Activated T-helper 1 cell treated with anti-CD3 and anti-CD28 coated beads, Interleukin-12 subunit alpha, Interleukin-12 subunit beta, Interleukin-2, Interleukin-4 antibody, amounts not matched to agents 30 ng/mL and 10 ng/mL and 1 ng/mL, durations not matched to agents 14 hours and 24 hours and 36 hours (primary cell): ENCODE measurements at regions of chr9 and their contacts with region 1.

Region 1: GRCh38 chr9:122264360-122265148 is at the starts of genes MRRF and RBM18:
- DNase-seq: peak; percentile 89
- H3K4me3 Mint-ChIP-seq: peak within 1 kb of the TSS; percentile 97
- H3K27ac Mint-ChIP-seq: peak within 1 kb of the TSS; percentile 100
- H3K4me1 Mint-ChIP-seq: peaks cover 38% of the 10 kb centered on the region
- H3K27me3 Mint-ChIP-seq: no peaks in the 10 kb centered on the region
- total RNA-seq, gene MRRF: 58.8 and 66.0 TPM in 2 replicates
- total RNA-seq, gene RBM18: 29.9 and 31.5 TPM in 2 replicates

Region 2: GRCh38 chr9:120642129-120642770 is 1622.3 kb before region 1 on chr9:
- intact Hi-C with region 1: no loop called
- DNase-seq: no peak
- H3K4me3 Mint-ChIP-seq: no peak overlapping the region
- H3K27ac Mint-ChIP-seq: no peak overlapping the region
- H3K4me1 Mint-ChIP-seq: no peaks in the 10 kb centered on the region
- H3K27me3 Mint-ChIP-seq: no peaks in the 10 kb centered on the region

Region 3: GRCh38 chr9:122125158-122125508 is 139.4 kb before region 1 on chr9:
- intact Hi-C with region 1: loop called (anchors 10 kb)
- DNase-seq: peak; percentile 60
- H3K4me3 Mint-ChIP-seq: no peak overlapping the region
- H3K27ac Mint-ChIP-seq: no peak overlapping the region
- H3K4me1 Mint-ChIP-seq: peaks cover 5% of the 10 kb centered on the region
- H3K27me3 Mint-ChIP-seq: peaks cover 29% of the 10 kb centered on the region

Region 4: DNA sequence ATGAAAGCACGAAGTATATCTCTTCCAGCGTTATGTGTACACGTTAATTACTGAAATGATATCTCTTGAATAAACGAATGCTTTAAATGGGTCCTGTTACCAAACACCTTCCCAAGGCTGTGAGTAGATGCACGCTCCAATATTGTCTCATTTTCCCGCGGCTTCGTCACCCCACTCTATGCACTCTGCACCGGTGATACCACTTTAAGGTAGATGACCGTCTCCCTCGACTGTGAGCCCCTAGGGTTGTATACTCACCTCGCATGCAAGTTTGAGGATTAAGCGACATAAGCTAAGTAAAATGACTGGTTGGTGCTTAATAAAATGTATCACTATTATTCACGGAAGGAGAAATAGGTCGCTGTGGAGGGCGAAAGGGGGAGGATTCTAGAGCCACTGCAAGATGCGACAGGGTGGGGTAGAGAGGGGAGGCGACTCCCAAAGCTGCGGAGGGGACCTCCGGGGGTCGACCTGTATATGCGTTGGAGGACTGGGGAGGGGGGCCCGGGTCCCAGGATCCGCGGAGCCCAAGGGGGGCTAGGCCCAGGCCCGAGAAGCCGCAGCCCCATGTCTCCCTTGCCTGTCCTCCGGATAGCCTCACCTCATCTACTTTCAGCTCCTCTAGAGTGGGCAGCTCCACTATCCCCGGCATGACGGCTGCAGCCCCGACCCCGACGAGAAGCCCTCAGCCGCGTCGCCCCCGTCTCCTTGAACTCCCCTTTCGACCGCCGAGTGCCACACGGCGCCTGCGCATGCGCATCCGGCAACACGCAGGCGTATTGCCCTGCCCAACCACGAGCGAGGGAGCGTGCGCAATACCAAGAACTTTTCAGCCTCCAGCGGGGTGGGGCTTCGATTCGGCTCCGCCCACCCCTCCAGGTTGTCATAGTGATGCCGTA is 105.3 kb before region 1 on chr9 and contains the starts of genes MORN5 and NDUFA8:
- intact Hi-C with region 1: loop called (anchors 1 kb)
- DNase-seq: peak; percentile 95
- H3K4me3 Mint-ChIP-seq: peak within 1 kb of the TSS; percentile 93
- H3K27ac Mint-ChIP-seq: peak within 1 kb of the TSS; percentile 87
- H3K4me1 Mint-ChIP-seq: peaks cover 35% of the 10 kb centered on the region
- H3K27me3 Mint-ChIP-seq: peaks cover 12% of the 10 kb centered on the region
- total RNA-seq, gene MORN5: not detected in 2 replicates
- total RNA-seq, gene NDUFA8: 49.6 and 51.6 TPM in 2 replicates

Region 5: DNA sequence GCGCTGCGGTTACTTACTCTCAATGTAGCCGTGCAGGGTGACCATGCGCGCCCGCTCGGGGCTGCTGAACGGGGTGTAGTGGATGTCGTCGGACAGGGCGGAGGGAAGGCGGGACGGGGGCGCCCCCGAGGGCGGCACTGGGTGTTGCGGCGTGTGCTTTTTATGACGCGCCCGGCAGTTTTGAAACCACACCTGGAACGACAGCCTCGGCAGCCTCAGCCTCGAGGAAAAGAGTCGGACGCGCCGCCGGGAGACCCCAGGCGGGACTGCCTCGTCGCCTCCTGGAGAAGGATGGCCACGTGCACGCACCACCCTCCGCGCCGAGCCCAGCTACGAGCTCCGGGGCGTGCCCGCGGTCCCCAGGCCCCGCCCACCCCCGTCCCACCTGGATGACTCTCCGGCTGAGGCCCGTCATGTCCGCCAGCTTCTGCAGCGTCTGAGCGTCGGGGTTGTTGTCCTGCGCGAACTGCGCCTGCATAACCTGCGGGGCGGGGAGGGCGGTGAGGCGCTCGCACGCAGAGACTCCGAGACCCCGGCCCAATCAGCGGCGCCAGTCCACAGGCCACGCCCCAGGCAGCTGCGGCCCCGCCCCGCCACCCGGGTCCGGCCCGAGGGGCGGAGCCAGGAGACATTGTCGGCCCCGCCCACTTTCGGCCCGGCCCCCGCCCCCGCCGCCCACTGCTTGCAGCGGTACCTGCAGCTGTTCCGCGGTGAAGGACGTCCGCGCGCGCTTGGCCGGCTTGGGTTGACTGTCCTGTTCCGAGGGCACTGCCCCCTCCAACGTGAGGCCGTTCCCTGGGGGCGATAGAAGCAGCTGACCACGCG is 50.8 kb before region 1 on chr9:
- intact Hi-C with region 1: loop called (anchors 1 kb)
- DNase-seq: peak; percentile 59
- H3K4me3 Mint-ChIP-seq: peak overlapping the region; percentile 72
- H3K27ac Mint-ChIP-seq: no peak overlapping the region
- H3K4me1 Mint-ChIP-seq: peaks cover 18% of the 10 kb centered on the region
- H3K27me3 Mint-ChIP-seq: peaks cover 66% of the 10 kb centered on the region

Region 6: DNA sequence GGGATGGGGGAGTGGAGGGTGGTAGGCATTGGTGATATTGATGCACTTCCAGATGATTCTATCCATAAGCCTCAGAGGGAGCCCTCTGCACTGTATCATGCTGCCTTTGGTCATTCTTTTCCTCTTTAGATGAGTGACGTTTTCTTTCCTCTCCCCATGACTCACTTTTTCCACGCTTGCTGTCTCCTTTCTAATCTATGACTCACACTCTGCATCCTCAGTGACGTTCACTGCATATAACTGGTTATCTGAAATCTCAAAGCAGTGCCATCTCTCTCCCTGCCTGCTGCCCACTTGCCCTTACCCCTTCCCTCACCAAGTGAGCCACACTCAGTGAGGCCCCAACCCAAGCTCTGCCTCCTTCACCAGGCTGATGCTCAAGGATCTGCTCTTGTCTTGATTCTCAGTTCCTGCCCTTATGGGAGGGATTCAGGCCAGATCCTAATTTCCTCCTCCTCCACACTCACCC is 137.9 kb after region 1 on chr9:
- intact Hi-C with region 1: loop called (anchors 1 kb)
- DNase-seq: peak; percentile 33
- H3K4me3 Mint-ChIP-seq: peak overlapping the region; percentile 5
- H3K27ac Mint-ChIP-seq: peak overlapping the region; percentile 86
- H3K4me1 Mint-ChIP-seq: peaks cover 25% of the 10 kb centered on the region
- H3K27me3 Mint-ChIP-seq: peaks cover 6% of the 10 kb centered on the region

Region 7: DNA sequence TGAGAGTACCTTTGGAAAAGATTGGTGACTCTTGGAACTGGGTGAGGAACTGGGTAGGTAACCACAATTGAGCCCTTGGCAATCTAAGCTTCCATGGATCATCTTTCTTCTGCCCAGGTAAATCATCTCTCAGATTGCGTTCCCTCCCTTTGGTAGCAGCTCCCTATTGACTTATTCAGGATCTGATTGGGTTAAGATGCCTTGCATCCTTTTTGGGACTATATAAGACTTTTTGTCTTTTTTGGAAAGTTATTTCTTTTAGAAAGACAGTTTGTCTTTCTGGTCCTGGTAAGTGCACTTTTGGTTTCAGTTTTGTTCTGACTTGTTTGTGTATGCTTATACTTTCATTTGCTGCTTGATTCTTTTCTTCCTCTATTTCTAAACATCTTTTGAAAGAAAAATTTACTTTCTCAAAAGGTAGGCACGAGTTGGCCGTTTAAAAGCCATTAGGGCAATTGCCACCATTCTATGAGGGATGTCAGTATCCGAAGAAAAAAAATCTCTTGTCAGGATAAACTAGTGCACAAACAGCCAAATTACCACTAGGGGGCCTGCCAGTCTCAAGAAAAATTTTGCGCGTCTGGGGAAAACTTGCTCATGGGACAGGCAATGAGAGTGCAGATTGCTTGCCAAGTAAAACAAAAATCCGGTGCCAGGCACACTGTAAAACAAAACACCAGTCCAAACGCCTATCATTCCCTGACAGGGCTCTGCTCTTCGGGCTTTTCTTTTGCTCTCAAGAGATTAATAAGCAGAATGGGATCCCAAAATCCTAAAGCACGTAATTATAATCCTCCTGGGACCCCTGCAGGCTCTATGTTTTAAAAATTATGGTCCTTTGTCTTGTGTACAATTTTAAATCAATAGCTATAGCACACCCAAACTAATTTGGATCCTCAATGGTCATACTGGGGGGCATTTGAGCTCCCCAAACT is 200.3 kb after region 1 on chr9:
- intact Hi-C with region 1: loop called (anchors 2 kb)
- DNase-seq: peak; percentile 59
- H3K4me3 Mint-ChIP-seq: peak overlapping the region; percentile 81
- H3K27ac Mint-ChIP-seq: peak overlapping the region; percentile 80
- H3K4me1 Mint-ChIP-seq: peaks cover 17% of the 10 kb centered on the region
- H3K27me3 Mint-ChIP-seq: peaks cover 26% of the 10 kb centered on the region